ENCODE measurements at regions of chr1 and their contacts with region 1.

Region 1: GRCh38 chr1:239814303-239814881 is 277.3 kb upstream of the FMN2 start:
- DNase-seq: peak; percentile 99
- ATAC-seq: peak; percentile 80
- H3K4me3 ChIP-seq: peak overlapping the region; percentile 56
- H3K27ac ChIP-seq: peak overlapping the region; percentile 90
- H3K4me1 ChIP-seq: peaks cover 46% of the 10 kb centered on the region
- H3K27me3 ChIP-seq: no peaks in the 10 kb centered on the region
- CTCF ChIP-seq: peak; percentile 49

Region 2: DNA sequence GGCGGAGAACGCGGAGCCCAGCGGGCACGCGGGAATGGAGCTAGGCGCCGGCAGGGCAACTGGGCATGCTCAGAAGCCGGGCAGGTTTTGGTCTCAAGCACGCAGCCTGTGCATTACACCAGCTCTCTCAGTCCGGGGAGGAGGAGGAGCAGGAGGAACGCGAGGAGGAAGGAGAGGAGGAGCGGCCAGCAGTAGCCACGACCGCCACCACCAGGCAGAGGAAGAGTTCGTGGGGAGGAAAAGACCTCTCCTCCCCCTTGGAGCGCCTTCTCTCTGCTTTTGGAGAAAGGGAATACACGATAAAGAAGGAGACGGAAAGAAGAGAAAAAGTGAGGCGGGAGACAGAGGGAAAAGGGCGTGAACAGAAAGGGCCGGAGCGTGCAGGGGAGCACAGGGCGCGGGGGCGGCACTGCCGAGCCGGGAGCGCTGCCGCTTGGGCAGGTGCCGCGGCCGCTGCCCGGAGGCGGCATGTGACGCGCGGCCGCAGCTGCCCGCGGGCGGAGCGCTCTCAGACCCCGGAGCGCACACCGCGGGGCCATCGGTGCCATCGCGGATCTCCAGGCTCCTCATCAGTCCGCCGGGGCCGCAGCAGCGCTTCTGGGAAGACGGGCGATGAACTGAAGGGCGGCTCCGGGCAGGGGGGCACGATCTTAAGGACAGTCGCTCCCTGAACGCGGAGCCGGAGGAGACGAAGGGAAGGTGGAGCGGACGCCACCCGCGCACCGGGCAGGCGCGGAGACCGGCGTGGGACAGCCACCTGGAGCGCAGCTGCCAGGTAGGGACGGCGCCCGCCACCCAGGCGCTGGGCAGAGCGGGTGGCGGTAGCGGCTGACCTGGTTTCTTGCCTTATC is 427.7 kb before region 1 on chr1 and contains the start of gene CHRM3:
- CTCF ChIA-PET with region 1: interaction called, 4 read pairs
- POLR2A ChIA-PET with region 1: no interaction called
- intact Hi-C with region 1: loop called (anchors 5 kb)
- DNase-seq: peak; percentile 90
- ATAC-seq: peak; percentile 82
- H3K4me3 ChIP-seq: peak within 1 kb of the TSS; percentile 76
- H3K27ac ChIP-seq: 0 out of 2 replicates have a peak within 1 kb of the TSS, but pooled peaks have one; percentile 9
- H3K4me1 ChIP-seq: peaks cover 15% of the 10 kb centered on the region; the same call in 1 of the 2 replicates
- H3K27me3 ChIP-seq: peaks cover 30% of the 10 kb centered on the region
- CTCF ChIP-seq: peak; percentile 60
- total RNA-seq, gene CHRM3: 1.2 and 3.5 TPM in 2 replicates

Region 3: GRCh38 chr1:239558991-239559390 is 255.4 kb before region 1 on chr1:
- CTCF ChIA-PET with region 1: no interaction called
- POLR2A ChIA-PET with region 1: no interaction called
- intact Hi-C with region 1: loop called (anchors 5 kb)
- DNase-seq: peak; percentile 69
- ATAC-seq: peak; percentile 72
- H3K4me3 ChIP-seq: peak overlapping the region; percentile 41
- H3K27ac ChIP-seq: peak overlapping the region; percentile 79
- H3K4me1 ChIP-seq: peaks cover 22% of the 10 kb centered on the region
- H3K27me3 ChIP-seq: no peaks in the 10 kb centered on the region
- CTCF ChIP-seq: no peak

Region 4: DNA sequence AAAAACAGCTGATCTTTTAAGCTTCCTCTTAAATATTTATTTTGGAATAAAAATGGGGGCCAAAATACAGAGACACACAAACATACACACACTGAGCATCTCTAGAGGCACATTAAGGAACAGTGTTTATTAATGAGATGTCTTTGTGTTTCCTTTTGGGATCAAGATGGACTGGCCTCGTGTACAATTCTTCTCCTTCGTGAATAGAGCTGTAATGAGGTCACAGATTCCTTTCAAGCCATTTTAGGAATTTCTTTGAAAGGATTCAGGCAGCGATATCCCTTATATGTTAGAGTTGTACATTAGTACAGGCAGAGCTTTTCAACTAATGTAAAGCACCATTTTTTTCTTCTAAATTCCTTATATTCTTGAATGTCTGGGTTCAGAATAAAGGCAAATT is 132.3 kb before region 1 on chr1:
- CTCF ChIA-PET with region 1: no interaction called
- POLR2A ChIA-PET with region 1: no interaction called
- intact Hi-C with region 1: loop called (anchors 2 kb)
- DNase-seq: no peak
- ATAC-seq: no peak
- H3K4me3 ChIP-seq: no peak overlapping the region
- H3K27ac ChIP-seq: peak overlapping the region; percentile 57
- H3K4me1 ChIP-seq: peaks cover 30% of the 10 kb centered on the region
- H3K27me3 ChIP-seq: no peaks in the 10 kb centered on the region
- CTCF ChIP-seq: no peak

Region 5: DNA sequence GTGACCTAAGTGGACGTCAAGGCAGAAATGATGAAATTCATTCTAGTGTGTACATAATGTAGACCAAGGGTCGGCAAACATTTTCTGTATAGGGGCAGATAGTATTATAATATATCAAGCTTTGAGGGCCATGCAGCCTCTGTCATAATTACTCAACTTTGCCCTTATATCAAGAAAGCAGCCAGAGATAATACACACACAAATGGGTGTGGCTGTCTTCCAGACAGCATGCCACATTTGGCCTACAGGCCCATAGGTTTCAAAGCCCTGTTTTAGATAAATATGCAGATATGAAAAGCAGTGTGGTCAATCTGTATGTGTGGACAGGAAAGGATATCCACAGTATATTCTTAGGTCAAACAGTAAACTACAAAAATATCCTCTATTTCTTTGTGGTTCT is 42.8 kb before region 1 on chr1:
- CTCF ChIA-PET with region 1: no interaction called
- POLR2A ChIA-PET with region 1: no interaction called
- intact Hi-C with region 1: no loop called
- DNase-seq: no peak
- ATAC-seq: no peak
- H3K4me3 ChIP-seq: no peak overlapping the region
- H3K27ac ChIP-seq: no peak overlapping the region
- H3K4me1 ChIP-seq: no peaks in the 10 kb centered on the region
- H3K27me3 ChIP-seq: no peaks in the 10 kb centered on the region
- CTCF ChIP-seq: no peak

Region 6: GRCh38 chr1:239833723-239834122 is 19.3 kb after region 1 on chr1:
- CTCF ChIA-PET with region 1: no interaction called
- POLR2A ChIA-PET with region 1: no interaction called
- intact Hi-C with region 1: loop called (anchors 2 kb)
- DNase-seq: peak; percentile 52
- ATAC-seq: peak; percentile 92
- H3K4me3 ChIP-seq: no peak overlapping the region
- H3K27ac ChIP-seq: no peak overlapping the region
- H3K4me1 ChIP-seq: 0 out of 2 replicates have a peak, but pooled peaks cover 6% of the 10 kb centered on the region
- H3K27me3 ChIP-seq: no peaks in the 10 kb centered on the region
- CTCF ChIP-seq: no peak

Region 7: GRCh38 chr1:239976130-239976968 is 162.0 kb after region 1 on chr1:
- CTCF ChIA-PET with region 1: no interaction called
- POLR2A ChIA-PET with region 1: no interaction called
- intact Hi-C with region 1: loop called (anchors 10 kb)
- DNase-seq: peak; percentile 86
- ATAC-seq: peak; percentile 84
- H3K4me3 ChIP-seq: no peak overlapping the region
- H3K27ac ChIP-seq: no peak overlapping the region
- H3K4me1 ChIP-seq: peaks cover 6% of the 10 kb centered on the region; the same call in 1 of the 2 replicates
- H3K27me3 ChIP-seq: peaks cover under 1% of the 10 kb centered on the region; the same call in 1 of the 2 replicates
- CTCF ChIP-seq: peak; percentile 99

Measured in PC-3 (cell line).